ENCODE measurements at regions of chr3 and their contacts with region 1.

Region 1: DNA sequence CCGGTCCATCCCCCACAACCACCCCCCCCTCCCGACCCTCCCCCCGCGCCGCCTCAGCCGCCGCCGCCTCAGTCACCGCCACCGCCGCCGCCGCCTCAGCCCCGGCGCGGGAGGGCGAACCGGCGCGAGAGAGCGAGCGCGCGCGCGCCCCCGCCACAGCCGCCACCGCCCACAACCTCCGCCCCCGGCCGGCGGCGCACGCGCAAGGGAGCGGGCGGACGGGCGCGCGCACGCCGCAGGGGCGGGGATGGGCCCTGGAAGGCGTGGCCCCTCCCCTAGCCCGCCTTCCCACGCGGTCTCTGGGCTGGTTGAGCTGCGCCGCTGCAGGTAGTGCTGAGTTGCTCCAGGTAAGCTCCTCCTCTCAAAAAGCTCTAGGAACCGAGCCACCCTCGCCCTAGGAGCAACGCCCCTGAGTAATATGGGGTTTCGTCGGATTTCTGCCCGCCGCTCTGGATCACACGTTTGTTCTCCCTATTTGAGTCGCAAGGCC is at the start of gene TMCC1:
- DNase-seq: peak; percentile 80
- ATAC-seq: peak; percentile 88
- H3K4me3 ChIP-seq: peak within 1 kb of the TSS; percentile 78 to 88 (median 88)
- H3K27ac ChIP-seq: peak within 1 kb of the TSS; percentile 87
- H3K4me1 ChIP-seq: peaks cover 47% of the 10 kb centered on the region
- H3K27me3 ChIP-seq: no peaks in the 10 kb centered on the region; a peak in 1 of 5 replicates
- CTCF ChIP-seq: peak; percentile 11; the same call in 1 of the 2 replicates
- EP300 ChIP-seq: no peak
- POLR2A ChIP-seq: peak; percentile 55 to 83
- RAD21 ChIP-seq: no peak
- total RNA-seq, gene TMCC1: 12.1 and 14.8 TPM in 2 replicates

Region 2: GRCh38 chr3:129927072-129927471 is 33.4 kb after region 1 on chr3:
- CTCF ChIA-PET with region 1: no interaction called
- POLR2A ChIA-PET with region 1: interaction called, 11 read pairs
- in situ Hi-C with region 1: no loop called
- intact Hi-C with region 1: loop called (anchors 5 kb)
- DNase-seq: peak; percentile 32
- ATAC-seq: peak; percentile 78
- H3K4me3 ChIP-seq: peak overlapping the region in 1 of 3 experiments; percentile 13; a peak in 1 of 6 replicates
- H3K27ac ChIP-seq: no peak overlapping the region
- H3K4me1 ChIP-seq: peaks cover 20% of the 10 kb centered on the region
- H3K27me3 ChIP-seq: no peaks in the 10 kb centered on the region
- CTCF ChIP-seq: no peak
- EP300 ChIP-seq: no peak
- POLR2A ChIP-seq: no peak
- RAD21 ChIP-seq: no peak

Measured in HepG2 (cell line).